Common myeloid progenitor, CD34-positive (primary cell): ENCODE measurements at regions of chr2 and their contacts with region 1.

Region 1: GRCh38 chr2:231701456-231702373 is 6.6 kb upstream of the PTMA start:
- DNase-seq: no peak
- H3K4me3 ChIP-seq: no peak overlapping the region
- H3K27ac ChIP-seq: no peak overlapping the region
- H3K4me1 ChIP-seq: peaks cover 0 to 15% (median 12%) of the 10 kb centered on the region in 4 experiments
- H3K27me3 ChIP-seq: no peaks in the 10 kb centered on the region

Region 2: DNA sequence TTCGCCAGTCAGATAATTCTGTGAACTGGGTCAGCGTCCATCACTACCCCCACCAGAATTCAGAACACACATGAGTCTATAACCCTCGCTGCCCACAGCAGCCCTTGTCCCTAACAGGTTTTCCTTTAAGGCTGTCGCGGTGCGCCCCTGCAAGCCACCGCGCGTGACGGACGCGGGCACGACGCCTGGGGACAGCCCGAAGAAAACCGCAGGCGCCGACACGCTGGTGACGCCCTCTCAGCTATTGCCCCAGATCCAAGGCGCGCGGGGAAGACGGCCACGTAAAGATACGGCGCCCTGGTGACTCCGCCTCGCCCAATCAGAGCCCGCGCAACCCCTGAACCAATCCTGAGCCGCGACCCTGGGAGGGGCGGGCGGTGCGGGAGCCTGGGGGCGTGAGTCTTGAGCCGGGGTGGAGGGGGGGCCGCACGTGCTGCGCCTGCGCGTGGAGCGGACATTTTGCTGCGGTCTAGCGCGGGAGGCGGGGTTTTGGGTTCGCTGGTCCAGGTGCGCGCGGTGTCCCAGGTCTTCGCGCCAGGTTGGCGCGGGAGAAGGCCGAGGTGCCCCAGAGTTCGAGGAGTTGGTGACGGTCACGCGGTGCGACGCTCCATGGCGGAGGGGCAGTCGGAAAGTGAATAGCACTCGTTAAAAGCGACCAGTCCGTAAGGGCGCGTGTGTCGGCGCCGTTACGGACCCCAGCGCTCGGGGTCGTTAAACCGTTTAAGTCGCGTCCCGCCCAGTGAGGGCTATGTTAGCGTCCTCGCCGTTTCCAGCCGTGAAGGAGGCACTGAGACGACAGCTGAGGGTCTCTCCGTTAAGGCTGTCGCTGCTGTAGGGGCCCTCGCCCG is 187.4 kb before region 1 on chr2:
- CTCF ChIA-PET with region 1: no interaction called
- POLR2A ChIA-PET with region 1: no interaction called
- DNase-seq: peak; percentile 98 to 99 (median 99)
- H3K4me3 ChIP-seq: peak overlapping the region; percentile 50 to 83 (median 76)
- H3K27ac ChIP-seq: peak overlapping the region; percentile 79 to 87
- H3K4me1 ChIP-seq: peaks cover 2 to 21% (median 10%) of the 10 kb centered on the region in 4 experiments
- H3K27me3 ChIP-seq: no peaks in the 10 kb centered on the region

Region 3: DNA sequence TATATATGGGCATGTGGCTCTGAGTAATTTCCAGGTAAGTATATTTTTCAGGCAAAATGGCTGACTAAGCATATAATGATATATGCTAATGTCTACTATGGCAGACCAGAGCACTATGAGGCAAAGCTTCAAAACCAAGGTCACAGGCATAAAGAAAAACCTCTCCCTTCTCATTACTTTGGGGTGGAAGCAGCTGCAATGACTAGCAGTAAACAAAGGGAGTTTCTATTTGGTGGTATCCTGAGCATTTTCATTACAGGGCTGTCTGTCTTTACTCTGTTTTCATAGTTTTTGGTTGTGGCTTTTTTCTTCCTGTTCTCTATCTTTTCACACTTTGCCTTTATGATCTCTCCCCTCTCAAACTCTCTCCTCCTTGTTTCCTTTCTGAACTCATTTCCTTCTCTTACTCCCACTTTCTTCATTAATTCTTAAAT is 63.8 kb after region 1 on chr2:
- CTCF ChIA-PET with region 1: no interaction called
- POLR2A ChIA-PET with region 1: no interaction called
- DNase-seq: peak in 2 of 3 donors; percentile 72 to 77
- H3K4me3 ChIP-seq: peak overlapping the region in 2 of 7 experiments; percentile 2 to 38
- H3K27ac ChIP-seq: no peak overlapping the region
- H3K4me1 ChIP-seq: peaks cover 4 to 28% (median 11%) of the 10 kb centered on the region in 4 experiments
- H3K27me3 ChIP-seq: no peaks in the 10 kb centered on the region

Region 4: GRCh38 chr2:232607011-232607410 is 905.3 kb after region 1 on chr2:
- CTCF ChIA-PET with region 1: no interaction called
- POLR2A ChIA-PET with region 1: interaction called, 10 read pairs
- DNase-seq: no peak
- H3K4me3 ChIP-seq: no peak overlapping the region
- H3K27ac ChIP-seq: no peak overlapping the region
- H3K4me1 ChIP-seq: peaks cover 0 to 10% (median 5%) of the 10 kb centered on the region in 4 experiments
- H3K27me3 ChIP-seq: no peaks in the 10 kb centered on the region